Breast epithelium (tissue), 4 donors: ENCODE measurements at regions of chr6 and their contacts with region 1.

Region 1: DNA sequence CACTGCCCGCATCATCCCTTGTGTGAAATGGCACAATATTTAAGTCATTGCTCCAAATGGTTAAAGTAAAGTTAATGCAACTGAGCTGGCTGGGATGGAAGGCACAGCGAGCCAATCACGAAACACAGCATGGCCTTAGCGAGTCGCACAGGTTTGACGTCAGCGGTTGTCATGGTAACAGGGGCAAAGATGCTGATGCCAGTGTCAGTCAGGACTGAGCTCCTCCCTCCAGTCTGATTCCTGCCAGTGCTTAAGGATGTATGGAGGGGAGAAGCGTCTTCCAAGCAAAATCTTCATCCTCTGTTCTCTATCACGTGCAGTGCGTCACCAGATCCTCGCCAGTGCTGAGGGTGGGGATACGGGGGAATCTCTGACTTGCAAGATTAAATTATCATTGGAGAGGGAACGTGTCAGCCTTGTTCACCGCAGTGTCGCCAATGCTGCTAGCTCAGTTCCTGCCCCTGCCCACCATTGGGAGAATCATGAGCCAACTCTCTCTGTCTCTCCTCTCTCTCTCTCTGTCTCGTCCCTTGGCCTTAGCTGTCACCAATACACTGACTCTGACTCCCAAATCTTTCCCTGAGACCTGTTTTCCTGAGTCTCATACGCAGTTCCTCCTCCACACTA is 24.5 kb downstream of the TSPYL4 start:
- DNase-seq: peak in 1 of 2 donors; percentile 22
- H3K4me3 ChIP-seq: peak overlapping the region; percentile 26 to 50 (median 37)
- H3K27ac ChIP-seq: no peak overlapping the region
- H3K4me1 ChIP-seq: no peaks in the 10 kb centered on the region
- H3K27me3 ChIP-seq: no peaks in the 10 kb centered on the region
- CTCF ChIP-seq: no peak
- POLR2A ChIP-seq: no peak

Region 2: GRCh38 chr6:115554060-115554459 is 675.3 kb before region 1 on chr6:
- intact Hi-C with region 1: no loop called
- DNase-seq: no peak
- H3K4me3 ChIP-seq: no peak overlapping the region
- H3K27ac ChIP-seq: no peak overlapping the region
- H3K4me1 ChIP-seq: no peaks in the 10 kb centered on the region
- H3K27me3 ChIP-seq: no peaks in the 10 kb centered on the region
- CTCF ChIP-seq: no peak
- POLR2A ChIP-seq: no peak

Region 3: GRCh38 chr6:116096979-116097816 is 132.2 kb before region 1 on chr6:
- intact Hi-C with region 1: no loop called
- DNase-seq: no peak
- H3K4me3 ChIP-seq: no peak overlapping the region
- H3K27ac ChIP-seq: no peak overlapping the region
- H3K4me1 ChIP-seq: peaks cover 0 to 8% of the 10 kb centered on the region in 2 donors
- H3K27me3 ChIP-seq: no peaks in the 10 kb centered on the region
- CTCF ChIP-seq: peak in 2 of 3 donors; percentile 32 to 37
- POLR2A ChIP-seq: no peak

Region 4: GRCh38 chr6:116145803-116146675 is 83.4 kb before region 1 on chr6:
- intact Hi-C with region 1: loop called (anchors 2 kb)
- DNase-seq: no peak
- H3K4me3 ChIP-seq: no peak overlapping the region
- H3K27ac ChIP-seq: no peak overlapping the region
- H3K4me1 ChIP-seq: no peaks in the 10 kb centered on the region
- H3K27me3 ChIP-seq: no peaks in the 10 kb centered on the region
- CTCF ChIP-seq: no peak
- POLR2A ChIP-seq: no peak